ENCODE measurements at regions of chr6 and their contacts with region 1.

Region 1: GRCh38 chr6:123869334-123869733 is 65.7 kb downstream of the NKAIN2 start:
- DNase-seq: no peak
- H3K4me3 ChIP-seq: no peak overlapping the region
- H3K27ac ChIP-seq: no peak overlapping the region
- H3K4me1 ChIP-seq: no peaks in the 10 kb centered on the region
- H3K27me3 ChIP-seq: no peaks in the 10 kb centered on the region
- CTCF ChIP-seq: no peak
- EP300 ChIP-seq: no peak
- POLR2A ChIP-seq: no peak

Region 2: GRCh38 chr6:122696079-122696478 is 1173.3 kb before region 1 on chr6:
- in situ Hi-C with region 1: no loop called
- intact Hi-C with region 1: loop called (anchors 5 kb)
- DNase-seq: no peak
- H3K4me3 ChIP-seq: no peak overlapping the region
- H3K27ac ChIP-seq: no peak overlapping the region
- H3K4me1 ChIP-seq: no peaks in the 10 kb centered on the region
- H3K27me3 ChIP-seq: no peaks in the 10 kb centered on the region
- CTCF ChIP-seq: no peak
- EP300 ChIP-seq: no peak
- POLR2A ChIP-seq: no peak

Region 3: DNA sequence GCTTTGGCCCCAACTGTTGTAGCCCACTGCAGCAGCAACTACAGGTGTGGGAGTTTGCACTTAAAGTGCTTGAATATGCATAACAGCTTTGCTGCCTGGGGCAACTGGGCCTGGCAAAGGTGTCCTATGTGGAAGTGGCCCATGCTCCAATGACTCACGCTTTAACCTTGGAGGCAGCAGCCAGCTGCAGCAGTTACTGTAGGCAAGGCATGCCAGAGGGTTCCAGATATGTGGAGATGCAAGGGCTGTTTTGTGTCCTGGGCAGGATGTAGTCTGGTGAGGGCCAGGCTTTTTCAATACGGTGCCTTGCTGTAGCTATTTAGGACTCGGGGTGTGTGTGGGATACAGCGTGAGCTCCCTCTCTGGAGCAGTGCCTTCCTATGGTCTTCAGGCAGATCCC is 84.6 kb after region 1 on chr6:
- in situ Hi-C with region 1: no loop called
- intact Hi-C with region 1: no loop called
- DNase-seq: no peak
- H3K4me3 ChIP-seq: no peak overlapping the region
- H3K27ac ChIP-seq: no peak overlapping the region
- H3K4me1 ChIP-seq: no peaks in the 10 kb centered on the region
- H3K27me3 ChIP-seq: no peaks in the 10 kb centered on the region
- CTCF ChIP-seq: no peak
- EP300 ChIP-seq: no peak
- POLR2A ChIP-seq: no peak

Measured in transverse colon (tissue), 4 donors.